Heart left ventricle (tissue), 16 donors: ENCODE measurements at regions of chrX and their contacts with region 1.

Region 1: GRCh38 chrX:20266810-20267606 is at the start of gene RPS6KA3:
- DNase-seq: peak; percentile 90 to 95 (median 92)
- ATAC-seq: peak; percentile 94 to 97 (median 96)
- H3K4me3 ChIP-seq: peak within 1 kb of the TSS; percentile 38 to 95 (median 69)
- H3K27ac ChIP-seq: peak within 1 kb of the TSS; percentile 26 to 89 (median 83)
- H3K4me1 ChIP-seq: peaks cover 0 to 30% (median 4%) of the 10 kb centered on the region in 12 donors
- H3K27me3 ChIP-seq: peaks cover 0 to 9% (median 0%) of the 10 kb centered on the region in 9 donors
- CTCF ChIP-seq: no peak
- POLR2A ChIP-seq: peak in 1 of 2 donors; percentile 76
- total RNA-seq, gene RPS6KA3: 28.1 to 52.3 (median 39.8) TPM

Region 2: DNA sequence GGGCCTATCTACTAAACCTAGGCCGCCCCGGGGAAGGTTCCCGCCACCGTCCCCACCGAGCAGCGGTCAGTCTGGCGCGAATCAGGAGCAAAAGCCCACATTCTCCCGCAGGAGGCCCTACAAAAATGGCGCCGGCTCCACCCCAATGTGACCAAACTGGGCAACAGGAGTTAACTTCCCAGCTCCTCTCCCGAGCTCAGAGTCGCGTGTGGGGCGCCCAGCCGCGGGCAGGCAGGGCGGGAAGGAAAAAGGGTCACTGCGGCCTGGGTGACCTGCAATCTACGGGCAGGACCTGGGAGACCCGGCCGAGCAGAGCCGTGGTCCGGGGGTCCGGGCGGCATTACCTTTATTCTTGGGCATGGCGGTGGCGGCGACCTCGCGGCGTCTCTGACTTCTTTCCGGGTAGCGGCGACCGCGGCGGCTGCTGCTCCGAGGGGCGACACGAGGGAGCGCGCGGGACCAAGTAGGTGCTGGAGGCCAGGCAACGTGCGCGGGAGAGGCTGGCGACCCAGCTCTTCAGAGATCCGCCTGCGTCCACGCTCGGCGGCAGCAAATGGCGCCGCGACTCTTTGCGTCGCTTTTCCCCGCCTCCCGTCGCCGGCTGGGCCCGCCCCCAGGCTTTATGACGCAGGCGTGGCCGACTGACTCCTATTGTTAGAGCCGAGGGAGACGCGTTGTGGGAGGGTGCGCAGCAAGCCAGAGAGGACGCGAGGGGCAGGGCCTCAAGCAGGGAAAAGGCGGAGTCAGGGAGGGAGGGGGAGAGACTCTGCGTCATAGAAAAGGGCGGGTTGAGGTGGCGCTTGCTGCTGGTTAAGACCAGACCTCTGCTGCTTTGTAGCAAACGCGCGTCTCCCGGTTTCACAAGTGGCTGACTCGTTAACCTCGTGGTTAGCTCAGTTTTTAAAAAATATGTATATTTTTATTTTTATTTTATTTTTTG is 125.5 kb before region 1 on chrX and contains the start of gene EIF1AX:
- intact Hi-C with region 1: loop called in 1 of 10 experiments (anchors 10 kb)
- DNase-seq: peak; percentile 95 to 99 (median 97)
- ATAC-seq: peak; percentile 99 to 100 (median 100)
- H3K4me3 ChIP-seq: peak within 1 kb of the TSS; percentile 52 to 95 (median 80)
- H3K27ac ChIP-seq: peak within 1 kb of the TSS; percentile 47 to 93 (median 88)
- H3K4me1 ChIP-seq: peaks cover 3 to 38% (median 15%) of the 10 kb centered on the region in 12 donors
- H3K27me3 ChIP-seq: peaks cover 0 to 7% (median 0%) of the 10 kb centered on the region in 9 donors
- CTCF ChIP-seq: no peak
- POLR2A ChIP-seq: peak; percentile 96
- total RNA-seq, gene EIF1AX: 39.6 to 162 (median 58.7) TPM

Region 3: DNA sequence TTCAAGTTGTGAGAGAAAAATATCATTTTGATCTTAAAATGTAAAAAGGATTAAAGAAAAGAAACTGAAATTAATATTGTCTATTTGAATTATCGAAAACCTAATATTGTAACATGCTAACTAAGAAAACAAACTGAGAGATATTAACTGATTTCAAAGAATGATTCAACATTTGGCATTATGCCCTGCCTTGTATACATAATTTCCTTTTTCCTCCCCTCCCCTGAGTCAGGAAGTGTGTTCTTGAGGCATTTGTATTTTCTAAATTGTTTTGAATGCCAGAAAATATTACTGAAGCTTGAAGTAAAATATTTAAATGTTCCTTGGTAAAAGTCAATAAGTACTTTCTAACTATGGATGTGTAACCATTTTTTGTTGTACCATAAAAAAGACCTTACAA is 49.7 kb before region 1 on chrX:
- intact Hi-C with region 1: loop called in 4 of 10 experiments (anchors 5 to 10 kb)
- DNase-seq: no peak
- ATAC-seq: peak in 2 of 4 donors; percentile 32 to 41
- H3K4me3 ChIP-seq: peak overlapping the region in 9 of 12 donors; percentile 30 to 60 (median 44)
- H3K27ac ChIP-seq: peak overlapping the region in 9 of 12 donors; percentile 39 to 76 (median 68)
- H3K4me1 ChIP-seq: peaks cover 0 to 36% (median 8%) of the 10 kb centered on the region in 12 donors
- H3K27me3 ChIP-seq: peaks cover 0 to 6% (median 0%) of the 10 kb centered on the region in 9 donors
- CTCF ChIP-seq: no peak
- POLR2A ChIP-seq: no peak

Region 4: GRCh38 chrX:20333672-20334071 is 66.7 kb after region 1 on chrX:
- intact Hi-C with region 1: no loop called
- DNase-seq: no peak
- ATAC-seq: no peak
- H3K4me3 ChIP-seq: no peak overlapping the region
- H3K27ac ChIP-seq: no peak overlapping the region
- H3K4me1 ChIP-seq: no peaks in the 10 kb centered on the region
- H3K27me3 ChIP-seq: peaks cover 0 to 16% (median 0%) of the 10 kb centered on the region in 9 donors
- CTCF ChIP-seq: no peak
- POLR2A ChIP-seq: no peak

Region 5: DNA sequence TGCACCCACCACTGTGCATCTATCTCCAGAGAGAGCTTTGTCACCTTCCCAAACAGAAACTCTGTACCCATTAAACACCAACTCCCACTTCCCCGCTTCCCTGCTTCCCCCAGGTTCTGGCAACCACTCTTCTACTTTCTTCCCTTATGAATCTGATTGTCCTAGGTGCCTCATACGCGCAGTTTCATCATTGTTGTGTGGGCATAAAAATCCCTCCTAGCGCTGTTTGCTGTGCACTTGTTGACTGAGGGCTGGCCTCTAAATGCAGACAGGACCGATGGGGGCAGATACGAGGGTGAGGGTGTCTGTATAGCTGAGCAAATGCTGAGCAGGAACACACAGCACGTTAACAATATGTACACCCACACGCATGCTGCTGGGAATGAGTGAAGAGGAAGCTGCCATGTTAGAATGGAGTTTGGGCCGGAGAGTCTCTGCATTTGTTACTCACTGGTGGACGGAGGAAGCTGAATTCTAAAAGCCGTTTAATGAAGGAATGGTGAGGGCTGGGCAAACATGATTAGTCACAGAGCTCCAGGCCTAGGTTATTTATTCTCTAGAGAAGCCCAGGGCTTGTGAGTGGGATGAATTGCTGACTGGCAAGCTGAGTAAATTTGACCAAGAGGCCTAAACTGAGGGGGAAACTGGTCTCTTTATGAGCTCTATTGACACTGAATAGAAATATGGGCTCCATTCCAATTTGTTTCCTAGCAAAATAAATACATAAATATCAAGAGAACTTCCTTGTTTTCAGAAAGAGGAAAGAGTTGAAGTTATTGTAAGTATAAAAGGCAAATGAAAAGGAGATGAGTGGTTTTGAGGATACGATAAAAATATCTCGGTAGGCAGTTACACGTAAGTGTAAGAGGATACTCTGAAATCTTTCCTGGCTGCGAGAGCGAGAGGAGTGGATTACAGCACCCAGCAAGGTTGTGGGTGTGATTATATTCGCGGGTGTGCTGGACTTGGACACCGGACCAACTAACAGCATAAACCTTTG is 95.6 kb after region 1 on chrX:
- intact Hi-C with region 1: loop called in 4 of 10 experiments (anchors 5 to 10 kb)
- DNase-seq: peak in 4 of 5 donors; percentile 13 to 39 (median 28)
- ATAC-seq: peak; percentile 81 to 89 (median 84)
- H3K4me3 ChIP-seq: no peak overlapping the region
- H3K27ac ChIP-seq: peak overlapping the region; percentile 57 to 91 (median 74)
- H3K4me1 ChIP-seq: peaks cover 0 to 29% (median 5%) of the 10 kb centered on the region in 12 donors
- H3K27me3 ChIP-seq: peaks cover 0 to 5% (median 0%) of the 10 kb centered on the region in 9 donors
- CTCF ChIP-seq: no peak
- POLR2A ChIP-seq: no peak

Region 6: GRCh38 chrX:20442597-20442996 is 175.6 kb after region 1 on chrX:
- intact Hi-C with region 1: loop called in 2 of 10 experiments (anchors 5 to 10 kb)
- DNase-seq: peak; percentile 64 to 87 (median 74)
- ATAC-seq: peak in 3 of 4 donors; percentile 77 to 78 (median 78)
- H3K4me3 ChIP-seq: no peak overlapping the region
- H3K27ac ChIP-seq: no peak overlapping the region
- H3K4me1 ChIP-seq: peaks cover 0 to 9% (median 0%) of the 10 kb centered on the region in 12 donors
- H3K27me3 ChIP-seq: peaks cover 0 to 13% (median 0%) of the 10 kb centered on the region in 9 donors
- CTCF ChIP-seq: peak; percentile 48 to 68 (median 62)
- POLR2A ChIP-seq: no peak